Heart right ventricle (tissue), 16 donors: ENCODE measurements at regions of chr1 and their contacts with region 1.

Region 1: GRCh38 chr1:101238681-101239094 is 1.9 kb downstream of the S1PR1 start:
- DNase-seq: peak; percentile 89 to 93
- ATAC-seq: peak; percentile 48 to 76 (median 66)
- H3K4me3 ChIP-seq: peak overlapping the region; percentile 56 to 90 (median 71)
- H3K27ac ChIP-seq: peak overlapping the region; percentile 43 to 99 (median 96)
- H3K4me1 ChIP-seq: peaks cover 0 to 58% (median 40%) of the 10 kb centered on the region in 9 donors
- H3K27me3 ChIP-seq: no peaks in the 10 kb centered on the region
- CTCF ChIP-seq: peak; percentile 86 to 97 (median 93)

Region 2: GRCh38 chr1:100921109-100921706 is 317.5 kb before region 1 on chr1:
- intact Hi-C with region 1: loop called in 7 of 10 experiments (anchors 2 to 10 kb)
- DNase-seq: peak in 1 of 2 donors; percentile 11
- ATAC-seq: no peak
- H3K4me3 ChIP-seq: no peak overlapping the region
- H3K27ac ChIP-seq: no peak overlapping the region
- H3K4me1 ChIP-seq: peaks cover 0 to 3% (median 0%) of the 10 kb centered on the region in 9 donors
- H3K27me3 ChIP-seq: no peaks in the 10 kb centered on the region
- CTCF ChIP-seq: peak; percentile 30 to 82 (median 77)

Region 3: GRCh38 chr1:101043776-101044175 is 194.9 kb before region 1 on chr1:
- intact Hi-C with region 1: loop called in 2 of 10 experiments (anchors 5 to 10 kb)
- DNase-seq: no peak
- ATAC-seq: peak in 6 of 8 donors; percentile 50 to 85 (median 72)
- H3K4me3 ChIP-seq: no peak overlapping the region
- H3K27ac ChIP-seq: no peak overlapping the region
- H3K4me1 ChIP-seq: peaks cover 0 to 13% (median 0%) of the 10 kb centered on the region in 9 donors
- H3K27me3 ChIP-seq: no peaks in the 10 kb centered on the region
- CTCF ChIP-seq: peak in 7 of 9 donors; percentile 8 to 54 (median 27)

Region 4: DNA sequence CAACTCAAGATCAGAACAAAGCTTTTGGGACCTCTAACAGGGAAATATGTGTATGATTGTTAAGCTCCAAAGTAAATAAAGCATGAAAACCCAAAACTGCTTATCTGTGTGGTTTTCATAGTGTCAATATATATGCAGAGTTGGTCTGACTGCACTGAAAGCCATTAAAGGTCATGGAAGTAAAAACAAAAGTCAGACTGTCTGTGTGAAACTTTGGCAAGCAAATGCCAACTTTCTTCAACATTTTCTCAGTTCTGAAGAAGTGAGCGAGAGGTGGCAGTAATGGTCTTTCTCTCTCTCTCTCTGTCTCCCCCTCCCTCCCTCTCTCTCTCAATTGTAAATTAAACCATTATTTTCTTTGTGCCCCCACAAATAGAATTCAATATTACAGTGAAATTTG is 101.9 kb before region 1 on chr1:
- intact Hi-C with region 1: loop called in 9 of 10 experiments (anchors 1 to 10 kb)
- DNase-seq: peak in 1 of 2 donors; percentile 25
- ATAC-seq: peak in 7 of 8 donors; percentile 53 to 80 (median 69)
- H3K4me3 ChIP-seq: no peak overlapping the region
- H3K27ac ChIP-seq: peak overlapping the region in 5 of 10 donors; percentile 2 to 50 (median 5)
- H3K4me1 ChIP-seq: peaks cover 0 to 37% (median 29%) of the 10 kb centered on the region in 9 donors
- H3K27me3 ChIP-seq: no peaks in the 10 kb centered on the region
- CTCF ChIP-seq: peak in 6 of 9 donors; percentile 34 to 63 (median 54)

Region 5: DNA sequence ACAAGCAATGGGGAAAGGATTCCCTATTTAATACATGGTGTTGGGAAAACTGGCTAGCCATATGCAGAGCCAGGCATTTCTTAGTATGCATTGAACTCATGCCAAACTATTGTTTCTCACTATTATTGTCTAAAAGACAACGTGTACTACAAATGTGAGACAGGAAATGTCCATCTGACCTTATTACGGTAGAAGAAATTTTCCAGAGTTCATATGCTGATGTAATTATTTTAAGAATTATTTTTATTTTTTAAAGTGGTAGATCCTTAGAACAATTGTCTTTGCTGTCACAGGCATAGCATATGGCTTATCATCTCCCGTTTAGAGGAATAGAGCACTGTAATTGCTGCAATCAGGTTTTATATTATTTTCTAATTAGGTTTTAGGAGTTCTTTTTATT is 77.1 kb before region 1 on chr1:
- intact Hi-C with region 1: loop called in 3 of 10 experiments (anchors 5 to 10 kb)
- DNase-seq: no peak
- ATAC-seq: peak; percentile 47 to 87 (median 80)
- H3K4me3 ChIP-seq: no peak overlapping the region
- H3K27ac ChIP-seq: peak overlapping the region; percentile 40 to 81 (median 72)
- H3K4me1 ChIP-seq: peaks cover 0 to 52% (median 23%) of the 10 kb centered on the region in 9 donors
- H3K27me3 ChIP-seq: no peaks in the 10 kb centered on the region
- CTCF ChIP-seq: no peak

Region 6: GRCh38 chr1:101178688-101179491 is 59.8 kb before region 1 on chr1:
- intact Hi-C with region 1: loop called in 2 of 10 experiments (anchors 5 kb)
- DNase-seq: no peak
- ATAC-seq: no peak
- H3K4me3 ChIP-seq: no peak overlapping the region
- H3K27ac ChIP-seq: peak overlapping the region in 1 of 10 donors; percentile 59
- H3K4me1 ChIP-seq: peaks cover 0 to 42% (median 14%) of the 10 kb centered on the region in 9 donors
- H3K27me3 ChIP-seq: no peaks in the 10 kb centered on the region
- CTCF ChIP-seq: no peak

Region 7: GRCh38 chr1:101203820-101204540 is 34.7 kb before region 1 on chr1:
- intact Hi-C with region 1: loop called in 1 of 10 experiments (anchors 2 kb)
- DNase-seq: peak in 1 of 2 donors; percentile 56
- ATAC-seq: peak; percentile 94 to 99 (median 97)
- H3K4me3 ChIP-seq: no peak overlapping the region
- H3K27ac ChIP-seq: peak overlapping the region in 9 of 10 donors; percentile 17 to 82 (median 73)
- H3K4me1 ChIP-seq: peaks cover 0 to 13% (median 11%) of the 10 kb centered on the region in 9 donors
- H3K27me3 ChIP-seq: no peaks in the 10 kb centered on the region
- CTCF ChIP-seq: no peak